ENCODE measurements at regions of chr12 and their contacts with region 1.

Region 1: DNA sequence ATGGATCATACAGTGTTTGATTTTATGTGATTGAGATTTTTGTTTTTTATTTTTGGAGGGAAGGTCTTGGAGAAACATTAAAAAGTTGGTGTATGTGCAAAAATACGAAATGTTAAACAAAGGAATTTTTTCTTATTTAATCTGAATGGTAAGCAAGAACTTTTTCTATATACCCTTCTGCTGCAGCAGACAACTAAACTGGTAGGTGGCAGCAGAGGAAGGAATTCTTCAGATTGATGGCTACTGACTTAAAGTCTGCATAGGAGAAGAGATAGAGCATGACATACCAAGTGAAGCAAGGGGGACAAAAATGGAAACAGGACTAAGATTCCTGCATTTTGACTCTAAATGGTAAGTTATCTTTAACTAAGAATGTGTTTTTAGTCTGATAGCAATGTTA is 42.0 kb upstream of the A2ML1 start:
- DNase-seq: no peak
- H3K4me3 ChIP-seq: no peak overlapping the region
- CTCF ChIP-seq: no peak
- POLR2A ChIP-seq: no peak

Region 2: GRCh38 chr12:8562310-8562709 is 218.1 kb before region 1 on chr12:
- intact Hi-C with region 1: no loop called
- DNase-seq: no peak
- H3K4me3 ChIP-seq: no peak overlapping the region
- CTCF ChIP-seq: no peak
- POLR2A ChIP-seq: no peak

Region 3: DNA sequence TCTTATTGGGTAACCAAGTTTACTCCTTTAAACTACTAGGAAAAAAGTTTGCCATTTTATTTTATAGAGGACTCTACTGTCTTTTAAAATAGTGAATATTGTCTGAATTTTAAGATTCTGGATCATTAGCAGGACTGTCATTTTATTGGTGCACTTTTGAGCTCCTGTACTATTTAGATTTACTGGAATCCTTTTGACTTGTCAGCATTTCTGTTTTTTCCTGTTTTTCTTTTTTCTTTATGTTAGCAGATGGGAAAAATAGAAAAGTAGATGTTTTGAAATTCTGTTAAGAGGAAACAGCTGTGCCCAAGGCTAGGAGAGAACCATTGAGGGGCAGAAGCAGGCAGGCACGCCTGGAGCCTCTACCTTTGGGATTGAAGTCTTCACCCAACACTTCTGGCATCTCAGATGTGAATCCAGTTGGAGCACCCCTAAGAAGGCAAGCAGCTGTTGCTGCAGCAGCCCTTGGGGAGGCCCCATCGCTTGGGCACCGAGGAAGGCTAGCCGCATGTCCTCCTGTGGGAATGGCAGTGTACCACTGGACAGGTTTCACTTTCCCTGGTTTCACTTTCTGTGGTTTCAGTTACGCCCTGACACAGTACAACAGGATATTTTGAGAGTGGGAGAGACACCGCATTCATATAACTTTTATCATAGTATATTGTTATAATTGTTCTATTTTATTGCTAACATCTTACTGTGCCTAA is 71.1 kb before region 1 on chr12:
- intact Hi-C with region 1: no loop called
- DNase-seq: no peak
- H3K4me3 ChIP-seq: no peak overlapping the region
- CTCF ChIP-seq: no peak
- POLR2A ChIP-seq: no peak

Region 4: DNA sequence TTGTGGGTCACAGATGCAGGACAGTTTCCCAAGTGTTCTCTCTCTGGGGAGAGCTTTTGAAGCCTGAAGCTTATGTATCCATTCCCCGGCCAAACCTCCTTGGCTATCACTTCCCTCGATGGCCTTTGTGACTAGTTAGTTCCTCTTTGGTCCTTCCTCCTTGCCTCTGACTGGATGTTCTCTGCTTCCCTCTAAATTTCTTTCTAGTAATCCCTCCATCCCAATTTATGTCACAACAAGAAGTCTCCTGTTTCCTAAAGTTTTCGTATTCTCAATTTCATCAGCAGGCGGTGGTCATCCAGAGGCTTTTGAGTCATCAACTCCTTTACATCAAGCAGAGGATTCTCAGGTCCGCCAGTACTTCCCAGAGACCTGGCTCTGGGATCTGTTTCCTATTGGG is 69.5 kb after region 1 on chr12:
- intact Hi-C with region 1: loop called (anchors 10 kb)
- DNase-seq: no peak
- H3K4me3 ChIP-seq: no peak overlapping the region
- CTCF ChIP-seq: no peak
- POLR2A ChIP-seq: no peak

Measured in lower leg skin (tissue), 4 donors.